ENCODE measurements at regions of chr11 and their contacts with region 1.

Region 1: GRCh38 chr11:124622531-124623451 is at the start of gene TBRG1:
- DNase-seq: peak; percentile 63 to 94 (median 77)
- ATAC-seq: peak; percentile 95
- H3K4me3 ChIP-seq: peak within 1 kb of the TSS; percentile 83
- H3K4me3 Mint-ChIP-seq: peak within 1 kb of the TSS; percentile 97
- H3K27ac ChIP-seq: peak within 1 kb of the TSS; percentile 88 to 90
- H3K27ac Mint-ChIP-seq: peak within 1 kb of the TSS; percentile 96
- H3K4me1 ChIP-seq: peaks cover 17% of the 10 kb centered on the region
- H3K4me1 Mint-ChIP-seq: peaks cover 49% of the 10 kb centered on the region
- H3K27me3 ChIP-seq: no peaks in the 10 kb centered on the region
- H3K27me3 Mint-ChIP-seq: peaks cover 15% of the 10 kb centered on the region
- CTCF ChIP-seq: no peak
- total RNA-seq, gene TBRG1: 62.4 to 65.9 TPM

Region 2: DNA sequence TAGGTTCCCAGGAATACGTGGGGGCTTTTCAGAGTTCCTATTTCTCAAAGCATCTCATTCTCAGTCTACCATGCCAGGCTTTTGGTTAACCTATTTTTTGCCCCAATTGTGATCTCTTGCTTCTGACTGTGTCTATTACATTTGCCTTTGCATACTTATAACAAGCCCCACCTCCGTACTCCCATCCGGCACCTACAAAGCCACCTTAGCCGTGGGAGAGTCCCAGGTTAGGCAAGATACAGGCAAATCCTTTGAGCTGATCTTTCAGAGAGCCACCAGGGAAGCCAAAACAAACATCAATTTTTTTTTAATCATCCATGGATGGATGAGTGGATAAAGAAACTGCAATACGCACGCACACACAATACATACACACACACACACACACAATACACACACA is 30.2 kb before region 1 on chr11:
- CTCF ChIA-PET with region 1: no interaction called
- POLR2A ChIA-PET with region 1: no interaction called
- intact Hi-C with region 1: no loop called
- DNase-seq: no peak
- ATAC-seq: no peak
- H3K4me3 ChIP-seq: no peak overlapping the region
- H3K4me3 Mint-ChIP-seq: no peak overlapping the region
- H3K27ac ChIP-seq: no peak overlapping the region
- H3K27ac Mint-ChIP-seq: no peak overlapping the region
- H3K4me1 ChIP-seq: no peaks in the 10 kb centered on the region
- H3K4me1 Mint-ChIP-seq: no peaks in the 10 kb centered on the region
- H3K27me3 ChIP-seq: peaks cover 3 to 17% of the 10 kb centered on the region in 2 experiments
- H3K27me3 Mint-ChIP-seq: peaks cover 46% of the 10 kb centered on the region
- CTCF ChIP-seq: no peak

Region 3: GRCh38 chr11:124644426-124645280 is 21.9 kb after region 1 on chr11:
- CTCF ChIA-PET with region 1: interaction called, 13 read pairs
- POLR2A ChIA-PET with region 1: interaction called, 3 read pairs
- intact Hi-C with region 1: no loop called
- DNase-seq: peak in 8 of 14 experiments; percentile 2 to 71 (median 28)
- ATAC-seq: peak; percentile 77
- H3K4me3 ChIP-seq: no peak overlapping the region
- H3K4me3 Mint-ChIP-seq: no peak overlapping the region
- H3K27ac ChIP-seq: no peak overlapping the region
- H3K27ac Mint-ChIP-seq: no peak overlapping the region
- H3K4me1 ChIP-seq: peaks cover 3% of the 10 kb centered on the region
- H3K4me1 Mint-ChIP-seq: no peaks in the 10 kb centered on the region
- H3K27me3 ChIP-seq: no peaks in the 10 kb centered on the region
- H3K27me3 Mint-ChIP-seq: no peaks in the 10 kb centered on the region
- CTCF ChIP-seq: peak; percentile 95

Region 4: GRCh38 chr11:124667601-124668000 is 44.8 kb after region 1 on chr11:
- CTCF ChIA-PET with region 1: interaction called, 5 read pairs
- POLR2A ChIA-PET with region 1: interaction called, 4 read pairs
- intact Hi-C with region 1: loop called (anchors 1 to 2 kb)
- DNase-seq: no peak
- ATAC-seq: no peak
- H3K4me3 ChIP-seq: no peak overlapping the region
- H3K4me3 Mint-ChIP-seq: no peak overlapping the region
- H3K27ac ChIP-seq: no peak overlapping the region
- H3K27ac Mint-ChIP-seq: no peak overlapping the region
- H3K4me1 ChIP-seq: peaks cover 15% of the 10 kb centered on the region
- H3K4me1 Mint-ChIP-seq: peaks cover 20% of the 10 kb centered on the region
- H3K27me3 ChIP-seq: no peaks in the 10 kb centered on the region
- H3K27me3 Mint-ChIP-seq: no peaks in the 10 kb centered on the region
- CTCF ChIP-seq: no peak

Region 5: DNA sequence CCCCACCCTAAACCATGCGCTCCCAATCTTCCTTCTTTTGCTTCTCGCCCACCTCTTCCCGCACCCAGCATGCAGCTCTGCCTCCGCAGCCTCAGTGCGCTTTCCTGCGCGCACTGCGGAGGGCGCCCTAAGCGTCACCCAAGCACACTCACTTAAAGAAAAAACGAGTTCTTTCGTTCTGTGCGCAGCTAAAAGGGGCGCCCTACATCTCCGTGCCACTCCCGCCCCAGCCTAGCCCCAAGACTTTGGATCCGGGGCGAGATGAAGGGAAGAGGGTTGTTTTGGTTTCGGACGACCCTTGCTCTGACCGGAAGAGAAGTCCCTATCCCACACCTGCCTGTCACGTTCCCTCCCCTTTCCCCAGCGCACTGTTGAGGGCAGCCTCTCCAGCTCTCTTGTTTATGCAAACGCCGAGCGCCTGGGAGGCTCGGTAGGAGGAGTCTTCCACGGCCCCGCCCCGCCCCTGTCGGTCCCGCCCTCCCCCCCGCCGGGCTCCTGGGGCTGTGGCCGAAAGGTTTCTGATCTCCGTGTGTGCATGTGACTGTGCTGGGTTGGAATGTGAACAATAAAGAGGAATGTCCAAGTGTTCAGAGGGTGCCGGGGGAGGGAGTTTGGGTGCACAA is 123.9 kb after region 1 on chr11:
- CTCF ChIA-PET with region 1: no interaction called
- POLR2A ChIA-PET with region 1: interaction called, 12 read pairs
- intact Hi-C with region 1: no loop called
- DNase-seq: peak; percentile 71 to 90 (median 76)
- ATAC-seq: peak; percentile 90
- H3K4me3 ChIP-seq: peak overlapping the region; percentile 95
- H3K4me3 Mint-ChIP-seq: peak overlapping the region; percentile 94
- H3K27ac ChIP-seq: peak overlapping the region; percentile 72 to 75
- H3K27ac Mint-ChIP-seq: peak overlapping the region; percentile 82
- H3K4me1 ChIP-seq: peaks cover 32% of the 10 kb centered on the region
- H3K4me1 Mint-ChIP-seq: peaks cover 5% of the 10 kb centered on the region
- H3K27me3 ChIP-seq: peaks cover 0 to 1% of the 10 kb centered on the region in 2 experiments
- H3K27me3 Mint-ChIP-seq: no peaks in the 10 kb centered on the region
- CTCF ChIP-seq: peak; percentile 67

Region 6: DNA sequence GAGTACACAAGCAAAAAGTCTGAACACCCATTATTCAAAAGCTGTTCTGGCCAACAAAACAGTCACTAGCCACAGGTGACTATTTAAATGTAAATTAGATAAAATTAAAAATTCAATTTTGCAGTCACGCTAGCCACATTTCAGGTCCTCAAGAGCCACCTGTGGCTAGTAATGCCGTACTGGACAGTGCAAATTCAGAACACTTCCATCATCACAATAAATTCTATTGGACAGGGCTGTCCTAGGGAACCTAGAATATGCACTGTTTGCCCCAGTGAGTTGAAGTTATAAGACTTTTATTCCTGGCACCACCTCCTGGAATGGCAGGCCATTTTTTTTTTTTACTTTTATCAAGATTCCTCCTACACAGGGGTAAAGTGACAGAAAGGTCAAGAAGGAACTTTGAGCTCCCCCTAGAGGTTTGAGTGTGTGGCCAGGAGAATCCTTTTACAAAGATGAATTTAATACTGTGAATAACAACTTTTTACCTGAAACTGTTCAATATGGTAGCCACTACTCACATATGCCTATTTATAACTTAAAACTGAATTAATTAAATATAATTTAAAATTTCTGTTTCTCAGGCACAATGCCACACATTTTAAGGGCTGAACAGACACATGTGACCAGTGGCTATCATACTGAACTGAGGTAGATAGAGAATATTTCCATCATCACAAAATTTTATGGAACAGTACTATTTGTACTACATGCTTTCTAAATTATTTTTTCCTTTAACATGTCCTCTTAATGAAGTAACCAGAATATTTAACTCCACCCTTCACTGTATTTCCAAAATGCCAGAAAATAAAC is 170.9 kb after region 1 on chr11:
- CTCF ChIA-PET with region 1: no interaction called
- POLR2A ChIA-PET with region 1: interaction called, 4 read pairs
- intact Hi-C with region 1: loop called in 1 of 2 experiments (anchors 2 kb)
- DNase-seq: peak in 4 of 14 experiments; percentile 35 to 71 (median 62)
- ATAC-seq: no peak
- H3K4me3 ChIP-seq: no peak overlapping the region
- H3K4me3 Mint-ChIP-seq: no peak overlapping the region
- H3K27ac ChIP-seq: no peak overlapping the region
- H3K27ac Mint-ChIP-seq: no peak overlapping the region
- H3K4me1 ChIP-seq: peaks cover 3% of the 10 kb centered on the region
- H3K4me1 Mint-ChIP-seq: peaks cover 46% of the 10 kb centered on the region
- H3K27me3 ChIP-seq: no peaks in the 10 kb centered on the region
- H3K27me3 Mint-ChIP-seq: no peaks in the 10 kb centered on the region
- CTCF ChIP-seq: peak; percentile 84

Region 7: GRCh38 chr11:125300791-125301218 is 678.0 kb after region 1 on chr11:
- CTCF ChIA-PET with region 1: no interaction called
- POLR2A ChIA-PET with region 1: no interaction called
- intact Hi-C with region 1: no loop called
- DNase-seq: no peak
- ATAC-seq: no peak
- H3K4me3 ChIP-seq: no peak overlapping the region
- H3K4me3 Mint-ChIP-seq: no peak overlapping the region
- H3K27ac ChIP-seq: no peak overlapping the region
- H3K27ac Mint-ChIP-seq: no peak overlapping the region
- H3K4me1 ChIP-seq: no peaks in the 10 kb centered on the region
- H3K4me1 Mint-ChIP-seq: no peaks in the 10 kb centered on the region
- H3K27me3 ChIP-seq: peaks cover 0 to 2% of the 10 kb centered on the region in 2 experiments
- H3K27me3 Mint-ChIP-seq: peaks cover 6% of the 10 kb centered on the region
- CTCF ChIP-seq: no peak

Region 8: DNA sequence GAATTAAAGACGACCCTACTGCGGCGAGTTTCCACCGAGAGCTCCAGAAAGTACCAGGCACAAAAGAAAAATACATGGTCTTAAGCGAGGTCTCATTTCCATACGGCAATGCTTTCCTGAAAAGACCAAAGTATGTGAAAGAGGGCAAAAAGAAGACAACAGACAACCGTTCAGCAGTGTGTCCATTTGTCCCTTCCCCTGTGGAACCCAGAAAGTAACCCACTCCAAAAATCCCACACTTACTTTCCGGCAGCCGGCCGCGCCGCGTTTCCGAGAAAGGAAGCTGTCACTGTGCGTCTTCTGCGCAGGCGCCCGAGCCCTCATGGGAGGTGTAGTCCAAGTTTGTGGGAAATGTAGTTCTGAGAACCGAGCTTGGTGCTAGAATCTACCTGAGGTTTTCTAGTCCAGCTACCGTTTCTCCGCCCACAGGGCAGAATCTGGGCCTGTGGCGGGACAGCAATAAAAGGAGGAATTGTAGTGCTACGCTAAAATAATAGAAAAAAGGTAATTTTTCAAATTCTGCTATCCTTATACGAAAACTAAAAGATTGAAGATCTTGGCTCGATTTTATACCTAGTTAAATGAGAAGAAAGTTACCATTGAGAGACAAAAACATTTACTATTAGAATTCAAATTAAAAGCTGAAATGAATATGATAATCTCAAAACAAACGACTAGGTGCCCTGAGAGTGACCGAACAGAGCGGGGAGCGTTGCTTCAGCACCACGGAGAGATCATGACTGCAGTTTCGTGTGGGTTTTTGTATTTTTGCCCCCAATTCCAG is 1280.3 kb after region 1 on chr11 and contains the start of gene PUS3:
- CTCF ChIA-PET with region 1: no interaction called
- POLR2A ChIA-PET with region 1: no interaction called
- intact Hi-C with region 1: loop called in 1 of 2 experiments (anchors 5 kb)
- DNase-seq: peak; percentile 75 to 92 (median 84)
- ATAC-seq: peak; percentile 93
- H3K4me3 ChIP-seq: peak within 1 kb of the TSS; percentile 86
- H3K4me3 Mint-ChIP-seq: peak within 1 kb of the TSS; percentile 95
- H3K27ac ChIP-seq: peak within 1 kb of the TSS; percentile 55
- H3K27ac Mint-ChIP-seq: peak within 1 kb of the TSS; percentile 88
- H3K4me1 ChIP-seq: peaks cover 29% of the 10 kb centered on the region
- H3K4me1 Mint-ChIP-seq: peaks cover 46% of the 10 kb centered on the region
- H3K27me3 ChIP-seq: peaks cover 9 to 27% of the 10 kb centered on the region in 2 experiments
- H3K27me3 Mint-ChIP-seq: peaks cover 41% of the 10 kb centered on the region
- CTCF ChIP-seq: no peak
- total RNA-seq, gene PUS3: 6.0 to 7.3 TPM